ENCODE measurements at regions of chr4 and their contacts with region 1.

Region 1: DNA sequence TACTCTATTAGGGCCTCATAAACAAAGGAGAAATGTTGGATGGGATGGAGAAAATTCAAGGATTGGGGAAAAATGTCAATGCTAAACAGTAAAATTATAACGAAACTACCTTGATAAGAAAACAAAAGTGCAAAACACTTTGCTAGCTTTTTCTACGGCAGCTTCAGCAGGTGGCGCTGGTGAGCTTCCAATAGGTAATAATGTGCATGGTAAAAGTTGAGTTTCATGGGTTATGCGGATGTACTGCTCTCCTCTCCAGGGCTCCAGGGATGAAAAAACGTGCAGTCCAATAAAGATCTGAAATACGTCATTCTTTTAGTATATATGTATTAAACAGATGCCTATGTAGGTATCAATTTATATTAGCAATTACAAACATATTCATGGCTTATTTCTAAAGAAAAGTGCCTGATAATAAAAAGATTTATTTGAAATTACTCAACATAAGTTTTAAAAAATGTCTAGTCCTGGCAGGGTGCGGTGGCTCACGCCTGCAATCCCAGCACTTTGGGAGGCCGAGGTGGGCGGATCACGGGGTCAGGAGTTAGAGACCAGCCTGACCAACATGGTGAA is 239.6 kb downstream of the GRXCR1 start:
- DNase-seq: peak; percentile 80
- H3K4me3 Mint-ChIP-seq: no peak overlapping the region
- H3K27ac Mint-ChIP-seq: no peak overlapping the region
- H3K4me1 Mint-ChIP-seq: no peaks in the 10 kb centered on the region
- H3K27me3 Mint-ChIP-seq: no peaks in the 10 kb centered on the region

Region 2: GRCh38 chr4:42995343-42995944 is 136.7 kb before region 1 on chr4:
- intact Hi-C with region 1: loop called (anchors 10 kb)
- DNase-seq: no peak
- H3K4me3 Mint-ChIP-seq: no peak overlapping the region
- H3K27ac Mint-ChIP-seq: no peak overlapping the region
- H3K4me1 Mint-ChIP-seq: no peaks in the 10 kb centered on the region
- H3K27me3 Mint-ChIP-seq: no peaks in the 10 kb centered on the region

Measured in activated CD4-positive, alpha-beta T cell treated with anti-CD3 and anti-CD28 coated beads, Interleukin-2, amount 10 ng/mL, durations not matched to agents 24 days and 14 days (primary cell).